ENCODE measurements at regions of chr9 and their contacts with region 1.

Region 1: DNA sequence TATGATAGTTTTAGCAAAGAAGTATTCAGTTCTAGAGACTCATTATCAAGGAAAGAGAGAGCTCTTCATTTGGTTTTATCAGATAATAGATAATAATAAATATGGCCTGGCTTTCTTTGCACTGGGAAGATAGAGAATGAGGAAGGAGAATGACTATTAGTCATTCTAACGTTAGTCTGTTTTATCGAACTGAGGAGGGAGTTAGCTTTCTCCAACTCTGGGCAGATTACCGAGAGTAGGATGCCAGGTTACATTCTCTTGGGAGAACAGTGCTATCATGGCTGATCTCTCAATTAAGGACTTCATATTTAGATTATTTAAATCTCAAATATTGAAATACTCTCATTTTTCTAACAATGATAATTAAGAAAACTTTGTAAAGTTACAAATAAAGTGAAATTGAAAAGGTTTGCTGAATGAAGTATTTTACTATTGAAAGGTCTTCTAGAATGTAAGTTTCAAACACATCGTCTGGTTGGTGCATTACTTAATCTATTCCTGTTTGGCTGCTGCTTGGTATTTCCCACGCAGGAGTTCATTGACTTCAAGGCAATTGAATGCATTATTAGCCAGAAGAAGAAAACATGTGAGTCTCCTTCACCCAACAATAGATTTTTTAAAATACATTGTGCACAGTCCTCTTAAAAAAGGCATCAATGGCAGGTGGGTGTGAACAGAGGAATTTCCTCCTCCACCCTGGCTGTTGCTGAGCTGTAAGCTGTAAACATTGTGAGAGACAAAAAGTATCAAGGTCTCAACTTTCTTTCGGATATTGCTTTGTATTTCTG is 140.8 kb downstream of the C9orf152 start:
- DNase-seq: no peak
- ATAC-seq: no peak
- H3K4me3 Mint-ChIP-seq: no peak overlapping the region
- H3K27ac Mint-ChIP-seq: no peak overlapping the region
- H3K4me1 Mint-ChIP-seq: peaks cover 17% of the 10 kb centered on the region
- H3K27me3 Mint-ChIP-seq: peaks cover 4% of the 10 kb centered on the region

Region 2: DNA sequence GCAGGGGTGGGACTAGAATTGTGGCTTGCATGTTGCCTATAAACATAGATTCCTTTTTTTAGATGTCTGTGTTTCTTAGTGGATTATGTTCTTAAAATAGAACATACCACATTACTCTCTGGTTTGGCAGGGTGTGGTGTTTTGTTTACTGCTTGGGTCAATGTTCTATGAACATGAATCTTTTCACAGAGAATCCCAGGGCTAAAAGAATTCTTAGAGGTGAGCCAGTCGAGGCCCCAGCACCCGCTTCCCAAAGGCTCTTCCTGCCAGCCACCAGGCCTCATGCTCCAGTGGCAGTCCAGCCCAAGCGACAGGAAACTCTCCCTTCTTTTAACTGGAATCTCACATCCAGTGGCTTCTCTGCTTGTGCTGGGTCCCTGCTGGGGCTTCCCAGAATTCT is 14.3 kb after region 1 on chr9:
- CTCF ChIA-PET with region 1: no interaction called
- POLR2A ChIA-PET with region 1: no interaction called
- intact Hi-C with region 1: loop called in 1 of 2 experiments (anchors 2 kb)
- DNase-seq: no peak
- ATAC-seq: no peak
- H3K4me3 Mint-ChIP-seq: no peak overlapping the region
- H3K27ac Mint-ChIP-seq: no peak overlapping the region
- H3K4me1 Mint-ChIP-seq: peaks cover 20% of the 10 kb centered on the region
- H3K27me3 Mint-ChIP-seq: no peaks in the 10 kb centered on the region

Measured in activated CD4-positive, alpha-beta T cell treated with anti-CD3 and anti-CD28 coated beads for 36 hours (primary cell).